ENCODE measurements at regions of chr7 and their contacts with region 1.

Region 1: GRCh38 chr7:43700059-43700501 is 29.2 kb downstream of the COA1 start:
- DNase-seq: peak; percentile 62 to 74 (median 70)
- H3K4me3 ChIP-seq: no peak overlapping the region
- H3K27ac ChIP-seq: no peak overlapping the region
- H3K4me1 ChIP-seq: no peaks in the 10 kb centered on the region
- H3K27me3 ChIP-seq: no peaks in the 10 kb centered on the region

Region 2: GRCh38 chr7:43582503-43583423 is 117.3 kb before region 1 on chr7 and contains the start of gene STK17A:
- CTCF ChIA-PET with region 1: interaction called, 137 read pairs
- POLR2A ChIA-PET with region 1: interaction called, 14 read pairs
- DNase-seq: peak; percentile 93 to 95 (median 95)
- H3K4me3 ChIP-seq: peak within 1 kb of the TSS; percentile 63 to 97 (median 91)
- H3K27ac ChIP-seq: peak within 1 kb of the TSS; percentile 81 to 87
- H3K4me1 ChIP-seq: peaks cover 7 to 19% (median 14%) of the 10 kb centered on the region in 4 experiments
- H3K27me3 ChIP-seq: peaks cover 3 to 14% (median 7%) of the 10 kb centered on the region in 5 experiments

Region 3: GRCh38 chr7:43619213-43620012 is 80.7 kb before region 1 on chr7:
- CTCF ChIA-PET with region 1: interaction called, 10 read pairs
- POLR2A ChIA-PET with region 1: no interaction called
- DNase-seq: no peak
- H3K4me3 ChIP-seq: no peak overlapping the region
- H3K27ac ChIP-seq: no peak overlapping the region
- H3K4me1 ChIP-seq: peaks cover 0 to 3% (median 2%) of the 10 kb centered on the region in 4 experiments
- H3K27me3 ChIP-seq: no peaks in the 10 kb centered on the region

Region 4: DNA sequence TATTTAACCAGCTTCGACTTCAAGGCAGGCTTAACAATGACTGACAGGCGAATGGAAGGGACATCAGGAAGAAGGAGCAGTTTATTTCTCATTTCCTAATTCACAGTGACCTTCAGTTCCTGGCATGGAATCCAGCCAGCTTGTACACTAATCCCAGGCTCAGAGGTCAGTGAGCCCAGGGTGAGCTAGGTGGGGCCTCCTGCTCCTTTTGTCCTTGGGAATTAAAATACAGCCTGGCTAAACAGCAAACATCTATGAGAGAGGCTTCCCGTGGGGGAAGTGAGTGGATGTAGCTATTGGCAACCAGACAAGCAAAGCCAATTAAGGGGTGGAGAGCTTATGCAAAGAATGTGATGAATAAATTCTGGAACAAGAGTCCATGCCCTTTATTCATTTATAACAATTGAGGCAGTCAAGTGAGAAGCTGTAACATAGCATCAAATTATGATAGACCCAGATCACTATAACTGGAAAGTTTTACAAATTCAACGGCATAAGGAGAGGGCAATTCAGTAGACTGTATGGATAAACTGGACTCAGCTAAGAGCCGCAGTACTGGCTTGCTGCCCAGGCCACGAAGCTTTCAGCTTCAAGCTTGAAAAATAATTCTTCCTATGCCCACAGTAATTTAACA is 60.1 kb before region 1 on chr7:
- CTCF ChIA-PET with region 1: interaction called, 61 read pairs
- POLR2A ChIA-PET with region 1: no interaction called
- DNase-seq: no peak
- H3K4me3 ChIP-seq: no peak overlapping the region
- H3K27ac ChIP-seq: no peak overlapping the region
- H3K4me1 ChIP-seq: no peaks in the 10 kb centered on the region
- H3K27me3 ChIP-seq: no peaks in the 10 kb centered on the region

Region 5: GRCh38 chr7:43647673-43648472 is 52.2 kb before region 1 on chr7:
- CTCF ChIA-PET with region 1: interaction called, 61 read pairs
- POLR2A ChIA-PET with region 1: interaction called, 10 read pairs
- DNase-seq: peak; percentile 72 to 88 (median 87)
- H3K4me3 ChIP-seq: peak overlapping the region in 4 of 7 experiments; percentile 20 to 48 (median 39)
- H3K27ac ChIP-seq: peak overlapping the region; percentile 40 to 62
- H3K4me1 ChIP-seq: peaks cover 40 to 61% (median 54%) of the 10 kb centered on the region in 4 experiments
- H3K27me3 ChIP-seq: no peaks in the 10 kb centered on the region

Region 6: GRCh38 chr7:43669286-43670081 is 30.6 kb before region 1 on chr7:
- CTCF ChIA-PET with region 1: interaction called, 13 read pairs
- POLR2A ChIA-PET with region 1: no interaction called
- DNase-seq: peak in 2 of 3 donors; percentile 78 to 85
- H3K4me3 ChIP-seq: no peak overlapping the region
- H3K27ac ChIP-seq: no peak overlapping the region
- H3K4me1 ChIP-seq: peaks cover 0 to 8% (median under 1%) of the 10 kb centered on the region in 4 experiments
- H3K27me3 ChIP-seq: no peaks in the 10 kb centered on the region

Region 7: DNA sequence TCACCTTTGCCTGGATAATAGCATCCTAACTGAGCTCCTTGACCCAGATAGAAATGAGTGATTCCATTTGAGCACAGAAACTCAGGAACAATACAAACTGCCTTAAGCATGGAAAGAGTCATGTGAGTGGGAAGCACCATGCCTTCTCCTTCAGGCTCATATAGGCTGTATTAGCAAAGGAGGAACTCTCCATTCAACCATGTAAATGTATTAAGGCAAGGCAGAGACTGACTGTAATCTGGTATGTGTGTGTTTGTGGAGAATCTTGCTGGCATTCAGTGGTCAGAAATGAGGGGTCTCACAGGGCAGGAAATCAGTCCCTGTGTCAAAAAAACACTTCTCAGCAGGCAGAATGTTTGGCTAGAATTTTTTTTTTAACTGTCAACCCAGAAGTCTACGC is 11.0 kb before region 1 on chr7:
- CTCF ChIA-PET with region 1: interaction called, 13 read pairs
- POLR2A ChIA-PET with region 1: no interaction called
- DNase-seq: no peak
- H3K4me3 ChIP-seq: no peak overlapping the region
- H3K27ac ChIP-seq: no peak overlapping the region
- H3K4me1 ChIP-seq: no peaks in the 10 kb centered on the region
- H3K27me3 ChIP-seq: no peaks in the 10 kb centered on the region